Activated naive CD4-positive, alpha-beta T cell treated with anti-CD3 and anti-CD28 coated beads, Interleukin-2, amount 10 ng/mL, durations not matched to agents 7 days and 5 days (primary cell): ENCODE measurements at regions of chr17 and their contacts with region 1.

Region 1: DNA sequence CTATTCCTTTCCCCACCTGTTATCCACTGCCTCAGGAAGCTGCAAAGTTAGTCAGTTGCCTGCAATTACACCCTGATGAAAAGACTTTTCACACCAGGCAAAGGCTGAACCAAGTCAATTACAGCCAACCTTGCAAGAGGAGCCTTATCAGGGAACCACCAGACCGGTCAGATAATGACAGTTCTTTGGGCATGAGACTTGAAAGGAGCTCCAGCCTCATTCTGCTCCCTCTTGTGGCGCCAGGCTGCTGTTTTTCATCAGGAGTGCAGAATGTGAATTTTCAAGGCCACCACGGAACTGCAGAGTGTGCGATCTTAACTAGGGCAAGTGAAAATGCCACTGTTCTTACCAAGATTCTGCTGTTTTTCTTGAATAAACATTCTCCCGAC is 22.5 kb downstream of the DNAI2 start:
- DNase-seq: peak; percentile 71
- H3K4me3 Mint-ChIP-seq: no peak overlapping the region
- H3K27ac Mint-ChIP-seq: no peak overlapping the region
- H3K4me1 Mint-ChIP-seq: peaks cover 23% of the 10 kb centered on the region
- H3K27me3 Mint-ChIP-seq: peaks cover 42% of the 10 kb centered on the region

Region 2: DNA sequence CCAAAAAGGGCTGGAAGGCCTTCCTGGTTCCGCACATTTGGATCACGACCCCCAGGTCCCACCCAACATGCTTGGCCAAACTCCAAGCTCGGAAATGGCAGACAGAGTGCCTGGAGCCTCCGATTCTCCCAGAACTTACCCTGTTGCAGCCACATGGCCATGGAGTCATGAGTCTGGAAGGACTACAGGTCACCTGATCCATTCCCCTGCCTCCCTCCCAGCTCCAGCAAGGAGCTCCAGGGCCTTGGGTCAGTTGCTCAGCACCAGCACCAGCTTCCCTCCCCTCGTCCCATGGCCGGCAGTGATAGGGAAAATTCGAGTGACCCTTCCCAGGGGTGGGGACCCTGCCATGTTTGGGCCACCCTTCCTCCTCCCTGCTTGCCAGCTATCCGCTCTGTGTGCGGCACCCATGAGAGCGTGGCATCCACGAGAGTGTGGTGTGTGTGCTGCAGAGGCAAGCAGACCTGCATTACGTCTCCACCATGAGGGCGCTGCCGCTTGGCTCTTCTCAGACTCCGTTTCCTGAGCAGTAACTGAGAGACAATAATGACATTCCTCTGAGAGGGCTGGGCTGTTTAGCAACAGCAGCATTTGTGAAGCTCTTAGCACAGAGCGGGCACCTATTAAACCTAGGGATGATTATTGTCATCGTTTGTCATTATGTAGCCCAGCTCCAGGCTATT is 114.4 kb before region 1 on chr17:
- CTCF ChIA-PET with region 1: no interaction called
- DNase-seq: no peak
- H3K4me3 Mint-ChIP-seq: no peak overlapping the region
- H3K27ac Mint-ChIP-seq: no peak overlapping the region
- H3K4me1 Mint-ChIP-seq: no peaks in the 10 kb centered on the region
- H3K27me3 Mint-ChIP-seq: peaks cover 39% of the 10 kb centered on the region

Region 3: DNA sequence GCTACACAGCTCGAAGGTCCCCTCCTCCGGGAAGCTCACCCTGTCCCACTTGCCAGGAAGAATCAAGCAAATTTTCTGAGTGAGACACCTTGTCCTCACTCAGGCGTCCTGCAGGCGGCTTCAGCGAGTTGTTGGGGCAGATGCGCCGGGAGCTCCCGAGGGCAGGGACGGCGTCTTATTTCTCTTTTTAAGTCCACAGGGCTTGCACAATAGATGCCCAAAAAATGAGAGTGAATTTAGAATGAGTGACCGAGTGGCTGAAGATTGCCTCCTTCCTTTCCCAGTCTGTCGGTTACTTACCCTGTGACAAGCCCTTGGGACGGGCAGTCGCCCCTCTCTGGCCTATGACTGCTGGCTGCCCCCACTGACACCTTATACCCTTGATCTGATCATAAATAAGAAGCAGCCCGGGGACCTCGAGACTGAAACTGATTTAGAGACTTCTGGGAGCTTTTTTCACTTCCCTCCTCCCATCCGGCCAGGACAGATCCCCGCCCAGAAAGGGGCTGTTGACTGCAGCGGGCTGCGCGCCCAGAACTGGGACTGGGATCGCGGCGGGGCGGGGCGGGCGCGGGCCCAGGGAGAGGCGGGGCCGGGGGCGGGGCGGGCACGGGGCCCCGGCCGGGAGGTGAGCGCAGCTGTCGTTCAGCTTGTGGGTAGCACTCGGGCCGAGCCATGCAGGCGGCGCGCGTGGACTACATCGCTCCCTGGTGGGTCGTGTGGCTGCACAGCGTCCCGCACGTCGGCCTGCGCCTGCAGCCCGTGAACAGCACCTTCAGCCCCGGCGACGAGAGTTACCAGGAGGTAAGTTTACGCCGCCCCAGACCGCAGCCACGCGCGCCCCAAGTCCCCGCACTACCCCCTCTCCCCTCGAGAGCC is 83.4 kb before region 1 on chr17 and contains the start of gene TTYH2:
- CTCF ChIA-PET with region 1: interaction called, 16 read pairs
- DNase-seq: peak; percentile 87
- H3K4me3 Mint-ChIP-seq: peak within 1 kb of the TSS; percentile 82
- H3K27ac Mint-ChIP-seq: peak within 1 kb of the TSS; percentile 87
- H3K4me1 Mint-ChIP-seq: peaks cover 76% of the 10 kb centered on the region
- H3K27me3 Mint-ChIP-seq: peaks cover 38% of the 10 kb centered on the region

Region 4: GRCh38 chr17:74280093-74280513 is 16.4 kb before region 1 on chr17:
- CTCF ChIA-PET with region 1: interaction called, 72 read pairs
- DNase-seq: peak; percentile 83
- H3K4me3 Mint-ChIP-seq: peak overlapping the region; percentile 2
- H3K27ac Mint-ChIP-seq: peak overlapping the region; percentile 98
- H3K4me1 Mint-ChIP-seq: peaks cover 91% of the 10 kb centered on the region
- H3K27me3 Mint-ChIP-seq: peaks cover 13% of the 10 kb centered on the region

Region 5: DNA sequence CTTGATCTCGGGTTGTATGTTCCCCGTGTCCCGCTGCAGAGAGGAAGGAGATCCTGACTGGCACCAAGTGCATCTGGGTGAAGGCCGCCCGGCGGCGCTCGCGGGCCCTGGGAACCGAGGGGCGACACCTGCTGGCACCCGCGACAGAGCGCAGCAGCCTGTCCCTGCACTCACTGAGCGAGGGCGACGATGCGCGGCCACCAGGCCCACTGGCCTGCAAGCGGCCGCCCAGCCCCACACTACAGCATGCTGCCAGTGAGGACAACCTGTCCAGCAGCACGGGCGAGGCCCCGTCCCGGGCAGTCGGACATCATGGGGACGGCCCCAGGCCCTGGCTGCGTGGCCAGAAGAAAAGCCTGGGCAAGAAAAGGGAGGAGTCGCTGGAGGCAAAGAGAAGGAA is 57.6 kb after region 1 on chr17:
- CTCF ChIA-PET with region 1: interaction called, 28 read pairs
- DNase-seq: peak; percentile 79
- H3K4me3 Mint-ChIP-seq: no peak overlapping the region
- H3K27ac Mint-ChIP-seq: no peak overlapping the region
- H3K4me1 Mint-ChIP-seq: peaks cover 10% of the 10 kb centered on the region
- H3K27me3 Mint-ChIP-seq: peaks cover 99% of the 10 kb centered on the region

Region 6: DNA sequence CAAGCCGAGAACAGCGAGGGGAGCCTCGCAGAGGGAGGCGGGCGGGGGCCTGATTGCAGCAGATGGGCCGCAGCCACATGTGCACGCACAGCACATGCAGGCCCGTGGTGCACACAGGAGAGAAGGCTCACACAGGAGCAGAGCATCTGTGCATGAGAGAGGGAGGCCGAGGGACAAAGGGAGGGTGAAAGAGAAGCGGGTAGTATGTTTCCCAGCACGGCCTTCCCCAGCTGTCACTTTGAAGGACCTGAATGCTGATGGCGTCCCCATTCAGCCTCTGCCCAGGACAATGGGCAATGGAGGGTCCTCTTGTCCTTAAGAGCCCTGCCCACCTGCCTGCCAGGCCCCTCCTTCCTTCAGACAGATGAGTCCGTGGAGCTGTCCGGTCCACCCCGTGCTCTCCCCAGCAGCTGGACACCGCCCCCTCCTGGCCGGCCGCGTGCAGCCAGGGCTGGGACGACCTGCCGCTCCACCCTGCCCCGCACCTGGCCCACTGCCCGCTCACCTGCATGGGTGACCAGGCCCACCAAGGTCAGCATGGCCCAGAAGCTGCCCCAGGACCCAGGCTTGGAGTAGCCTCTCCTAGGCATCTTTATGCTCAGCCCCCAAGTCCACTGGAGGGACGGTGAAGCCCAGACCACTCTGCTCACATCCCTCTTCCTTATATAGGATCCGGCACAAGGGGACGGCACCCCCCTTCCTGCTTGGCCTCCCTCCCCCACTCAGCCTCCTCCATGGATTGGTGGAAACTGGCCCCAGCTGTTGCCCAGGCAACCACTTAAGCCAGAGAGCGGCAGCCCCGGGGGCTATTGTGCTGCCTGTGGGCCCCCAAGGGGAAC is 64.9 kb after region 1 on chr17 and contains the start of gene BTBD17:
- CTCF ChIA-PET with region 1: interaction called, 15 read pairs
- DNase-seq: peak; percentile 61
- H3K4me3 Mint-ChIP-seq: no peak within 1 kb of the TSS
- H3K27ac Mint-ChIP-seq: no peak within 1 kb of the TSS
- H3K4me1 Mint-ChIP-seq: peaks cover 5% of the 10 kb centered on the region
- H3K27me3 Mint-ChIP-seq: peaks cover 79% of the 10 kb centered on the region

Region 7: DNA sequence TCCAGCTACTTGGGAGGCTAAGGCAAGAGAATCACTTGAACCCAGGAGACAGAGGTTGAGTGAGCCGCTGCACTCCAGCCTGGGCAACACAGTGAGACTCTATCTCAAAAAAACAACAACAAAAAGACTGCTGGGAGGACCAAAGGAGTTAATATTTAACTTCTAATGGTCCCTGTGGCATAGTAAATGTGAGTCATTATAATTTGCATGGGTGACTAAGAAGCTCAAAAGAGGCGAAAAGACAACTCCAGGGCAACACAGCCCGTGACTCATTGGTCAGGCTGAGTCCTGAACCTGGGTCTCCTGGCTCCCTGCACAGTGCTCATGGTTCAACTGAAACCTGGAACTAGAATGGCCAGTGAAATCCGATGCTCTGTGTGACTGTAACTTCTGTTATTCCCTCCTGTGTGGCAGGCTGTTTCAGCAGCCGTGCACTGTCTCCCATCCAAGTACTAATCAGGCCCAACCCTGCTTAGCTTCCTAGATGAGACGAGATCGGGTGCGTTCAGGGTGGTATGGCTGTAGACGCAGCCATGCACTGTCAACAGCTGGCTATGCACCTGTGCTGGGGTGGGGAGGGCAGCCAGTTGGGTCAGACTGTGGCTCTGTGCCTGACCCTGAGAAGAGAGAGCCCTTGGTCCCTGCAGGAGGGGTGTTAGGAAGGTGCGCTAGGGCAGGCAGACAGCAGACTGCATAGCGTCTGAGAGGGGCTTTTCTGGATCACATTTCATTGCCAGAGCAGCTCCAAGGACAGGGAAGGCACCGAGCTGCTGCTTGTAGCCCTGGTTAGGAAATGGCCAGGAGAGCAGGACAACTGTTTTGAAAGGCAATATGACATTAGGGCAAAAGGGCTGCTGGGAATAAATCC is 120.9 kb after region 1 on chr17:
- CTCF ChIA-PET with region 1: no interaction called
- DNase-seq: no peak
- H3K4me3 Mint-ChIP-seq: no peak overlapping the region
- H3K27ac Mint-ChIP-seq: no peak overlapping the region
- H3K4me1 Mint-ChIP-seq: no peaks in the 10 kb centered on the region
- H3K27me3 Mint-ChIP-seq: peaks cover 29% of the 10 kb centered on the region